HCT116 (cell line): ENCODE measurements at regions of chr13 and their contacts with region 1.

Region 1: GRCh38 chr13:26221721-26222519 is at the start of gene RNF6:
- DNase-seq: peak; percentile 96
- ATAC-seq: peak; percentile 98
- H3K4me3 ChIP-seq: peak within 1 kb of the TSS; percentile 83 to 93
- H3K27ac ChIP-seq: peak within 1 kb of the TSS; percentile 95
- H3K4me1 ChIP-seq: peaks cover 10 to 13% of the 10 kb centered on the region in 2 experiments
- H3K27me3 ChIP-seq: no peaks in the 10 kb centered on the region
- CTCF ChIP-seq: no peak
- POLR2A ChIP-seq: peak; percentile 30
- RAD21 ChIP-seq: no peak
- total RNA-seq, gene RNF6: 33.2 TPM

Region 2: GRCh38 chr13:26051657-26052311 is 170.1 kb before region 1 on chr13 and contains the start of gene SHISA2:
- CTCF ChIA-PET with region 1: no interaction called
- POLR2A ChIA-PET with region 1: no interaction called
- RAD21 ChIA-PET with region 1: no interaction called
- intact Hi-C with region 1: no loop called
- DNase-seq: no peak
- ATAC-seq: no peak
- H3K4me3 ChIP-seq: no peak within 1 kb of the TSS
- H3K27ac ChIP-seq: no peak within 1 kb of the TSS
- H3K4me1 ChIP-seq: no peaks in the 10 kb centered on the region
- H3K27me3 ChIP-seq: peaks cover 38% of the 10 kb centered on the region
- CTCF ChIP-seq: no peak
- POLR2A ChIP-seq: no peak
- RAD21 ChIP-seq: no peak
- total RNA-seq, gene SHISA2: not detected

Region 3: GRCh38 chr13:26253787-26254582 is 32.1 kb after region 1 on chr13 and contains the start of gene CDK8:
- CTCF ChIA-PET with region 1: no interaction called
- POLR2A ChIA-PET with region 1: no interaction called
- RAD21 ChIA-PET with region 1: no interaction called
- intact Hi-C with region 1: loop called (anchors 1 kb)
- DNase-seq: peak; percentile 83
- ATAC-seq: peak; percentile 90
- H3K4me3 ChIP-seq: peak within 1 kb of the TSS; percentile 67 to 75
- H3K27ac ChIP-seq: peak within 1 kb of the TSS; percentile 90
- H3K4me1 ChIP-seq: peaks cover 6 to 13% of the 10 kb centered on the region in 2 experiments; a peak in 3 of 4 replicates
- H3K27me3 ChIP-seq: no peaks in the 10 kb centered on the region
- CTCF ChIP-seq: no peak
- POLR2A ChIP-seq: peak; percentile 59
- RAD21 ChIP-seq: no peak
- total RNA-seq, gene CDK8: 23.8 TPM